ENCODE measurements at regions of chr1 and their contacts with region 1.

Region 1: GRCh38 chr1:117367047-117368018 is at the start of gene MAN1A2:
- DNase-seq: peak; percentile 83
- H3K4me3 ChIP-seq: peak within 1 kb of the TSS; percentile 92 to 96 (median 96)
- H3K27ac ChIP-seq: peak within 1 kb of the TSS; percentile 66
- H3K4me1 ChIP-seq: peaks cover 33% of the 10 kb centered on the region
- H3K27me3 ChIP-seq: no peaks in the 10 kb centered on the region
- CTCF ChIP-seq: no peak
- POLR2A ChIP-seq: peak; percentile 49
- total RNA-seq, gene MAN1A2: 36.2 and 38.3 TPM in 2 replicates

Region 2: DNA sequence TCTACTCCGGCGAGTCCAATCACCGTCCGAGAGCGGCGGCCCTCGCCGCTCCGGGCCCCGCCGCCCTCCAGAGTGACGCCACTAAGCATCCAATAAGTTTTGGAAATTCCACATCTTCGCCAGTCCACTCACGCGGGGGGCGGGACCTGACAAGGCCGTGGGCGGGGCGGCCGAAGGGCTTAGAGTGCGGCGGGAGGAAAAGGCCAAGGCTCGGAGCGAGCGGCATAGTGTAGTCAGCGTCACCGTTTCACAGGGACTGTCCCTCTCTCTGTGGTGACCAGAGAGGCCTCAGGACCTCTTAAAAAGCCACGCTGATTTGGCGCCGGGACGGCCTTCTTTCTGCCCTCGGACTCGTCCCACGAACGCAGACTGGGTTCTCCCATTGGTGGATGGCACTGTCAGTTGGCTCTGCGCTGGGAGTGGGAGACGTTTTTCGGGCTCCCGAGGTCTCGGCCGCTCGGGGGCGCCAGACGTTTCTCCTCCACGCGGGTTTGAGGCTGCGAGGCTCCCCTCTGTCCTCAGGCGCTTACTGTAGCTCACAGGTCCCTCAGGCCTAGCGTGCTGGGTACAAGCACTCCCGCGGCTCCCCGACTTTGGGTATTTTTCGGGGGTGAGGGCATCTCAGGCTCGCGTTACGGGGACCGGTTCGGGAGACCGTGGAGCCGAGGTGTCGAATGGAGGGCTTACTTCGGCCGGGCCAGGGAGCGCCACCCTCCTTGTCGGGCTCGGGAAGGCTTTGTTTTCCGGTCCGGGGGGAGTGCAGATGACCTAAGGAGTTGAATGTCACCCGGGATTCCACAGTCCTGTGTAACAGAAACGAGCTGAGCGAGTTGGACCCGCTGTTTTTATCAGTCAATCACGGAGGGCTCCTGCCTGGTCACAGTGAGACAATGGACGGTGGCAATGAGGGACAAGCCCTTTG is 245.3 kb before region 1 on chr1:
- CTCF ChIA-PET with region 1: no interaction called
- POLR2A ChIA-PET with region 1: no interaction called
- dilution Hi-C with region 1: no loop called
- intact Hi-C with region 1: loop called (anchors 2 kb)
- DNase-seq: peak; percentile 98
- H3K4me3 ChIP-seq: peak overlapping the region; percentile 48 to 86 (median 74)
- H3K27ac ChIP-seq: peak overlapping the region; percentile 90
- H3K4me1 ChIP-seq: peaks cover 10% of the 10 kb centered on the region
- H3K27me3 ChIP-seq: peaks cover 11 to 25% of the 10 kb centered on the region in 2 experiments
- CTCF ChIP-seq: peak; percentile 88 to 91
- POLR2A ChIP-seq: no peak

Region 3: DNA sequence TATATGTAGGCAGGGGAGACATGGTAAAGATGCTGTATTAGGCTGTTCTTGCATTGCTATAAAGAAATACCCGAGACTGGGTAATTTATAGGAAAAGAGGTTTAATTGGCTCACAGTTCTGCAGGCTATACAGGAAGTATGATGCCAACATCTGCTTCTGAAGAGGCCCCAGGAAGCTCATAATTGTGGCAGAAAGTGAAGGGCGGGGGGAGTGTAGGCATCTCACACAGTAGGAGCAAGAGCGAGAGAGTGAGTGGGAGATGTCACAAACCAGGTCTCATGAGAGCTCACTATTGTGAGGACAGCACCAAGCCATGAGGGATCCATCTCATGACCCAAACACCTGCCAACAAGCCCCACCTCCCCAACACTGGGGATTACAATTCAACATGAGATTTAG is 21.0 kb after region 1 on chr1:
- CTCF ChIA-PET with region 1: no interaction called
- POLR2A ChIA-PET with region 1: no interaction called
- dilution Hi-C with region 1: no loop called
- intact Hi-C with region 1: no loop called
- DNase-seq: no peak
- H3K4me3 ChIP-seq: no peak overlapping the region
- H3K27ac ChIP-seq: no peak overlapping the region
- H3K4me1 ChIP-seq: no peaks in the 10 kb centered on the region
- H3K27me3 ChIP-seq: no peaks in the 10 kb centered on the region
- CTCF ChIP-seq: no peak
- POLR2A ChIP-seq: no peak

Region 4: GRCh38 chr1:117433928-117434327 is 66.6 kb after region 1 on chr1:
- CTCF ChIA-PET with region 1: no interaction called
- POLR2A ChIA-PET with region 1: no interaction called
- dilution Hi-C with region 1: no loop called
- intact Hi-C with region 1: loop called (anchors 5 kb)
- DNase-seq: no peak
- H3K4me3 ChIP-seq: no peak overlapping the region
- H3K27ac ChIP-seq: no peak overlapping the region
- H3K4me1 ChIP-seq: no peaks in the 10 kb centered on the region
- H3K27me3 ChIP-seq: no peaks in the 10 kb centered on the region
- CTCF ChIP-seq: no peak
- POLR2A ChIP-seq: no peak

Region 5: GRCh38 chr1:117512743-117513321 is 145.5 kb after region 1 on chr1:
- CTCF ChIA-PET with region 1: no interaction called
- POLR2A ChIA-PET with region 1: no interaction called
- dilution Hi-C with region 1: no loop called
- intact Hi-C with region 1: loop called (anchors 2 kb)
- DNase-seq: peak; percentile 41
- H3K4me3 ChIP-seq: no peak overlapping the region
- H3K27ac ChIP-seq: no peak overlapping the region
- H3K4me1 ChIP-seq: no peaks in the 10 kb centered on the region
- H3K27me3 ChIP-seq: no peaks in the 10 kb centered on the region
- CTCF ChIP-seq: peak; percentile 20 to 32
- POLR2A ChIP-seq: no peak

Region 6: GRCh38 chr1:117821782-117822447 is 454.6 kb after region 1 on chr1:
- CTCF ChIA-PET with region 1: no interaction called
- POLR2A ChIA-PET with region 1: no interaction called
- dilution Hi-C with region 1: no loop called
- intact Hi-C with region 1: loop called (anchors 5 kb)
- DNase-seq: peak; percentile 98
- H3K4me3 ChIP-seq: no peak overlapping the region
- H3K27ac ChIP-seq: peak overlapping the region; percentile 82
- H3K4me1 ChIP-seq: peaks cover 39% of the 10 kb centered on the region
- H3K27me3 ChIP-seq: no peaks in the 10 kb centered on the region
- CTCF ChIP-seq: no peak
- POLR2A ChIP-seq: peak; percentile 49